Heart right ventricle (tissue), 16 donors: ENCODE measurements at regions of chr17 and their contacts with region 1.

Region 1: DNA sequence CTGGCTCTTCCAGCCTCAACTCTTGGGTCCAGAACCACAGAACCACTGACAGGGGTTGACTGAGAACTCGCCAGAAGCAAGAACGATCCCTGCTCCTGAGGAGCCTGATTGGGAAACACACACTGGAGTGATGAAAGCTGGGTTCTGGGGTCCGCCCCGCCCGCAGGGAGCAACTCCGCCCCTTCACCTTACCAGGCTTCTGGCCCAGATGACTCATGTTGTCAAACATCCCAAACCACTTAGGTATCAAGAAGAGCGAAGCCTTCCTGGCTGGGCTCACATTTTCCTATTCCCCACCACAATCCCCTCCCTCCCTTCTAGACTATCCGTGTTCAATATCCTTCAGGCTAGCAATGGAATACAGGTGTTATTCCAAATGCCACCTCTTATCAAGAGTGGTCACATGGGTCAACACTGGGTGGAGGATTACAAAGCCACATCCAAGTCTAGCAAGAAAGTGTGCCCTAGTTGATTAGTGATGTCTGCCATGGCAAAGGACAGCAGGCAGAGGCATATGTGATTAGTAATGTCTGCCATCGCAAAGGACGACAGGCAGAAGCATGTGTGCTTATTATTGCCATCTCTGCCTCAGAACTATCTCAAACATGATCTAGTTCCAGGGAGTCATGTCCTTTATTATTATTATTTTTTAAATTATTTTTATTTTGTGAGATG is 70.5 kb downstream of the TIMM22 start:
- DNase-seq: peak; percentile 52 to 55
- ATAC-seq: peak; percentile 78 to 95 (median 90)
- H3K4me3 ChIP-seq: no peak overlapping the region
- H3K27ac ChIP-seq: peak overlapping the region in 5 of 10 donors; percentile 19 to 59 (median 39)
- H3K4me1 ChIP-seq: peaks cover 0 to 15% (median 0%) of the 10 kb centered on the region in 9 donors
- H3K27me3 ChIP-seq: no peaks in the 10 kb centered on the region
- CTCF ChIP-seq: no peak

Region 2: GRCh38 chr17:915538-916201 is 151.7 kb before region 1 on chr17:
- intact Hi-C with region 1: no loop called
- DNase-seq: peak; percentile 30 to 75
- ATAC-seq: peak; percentile 66 to 88 (median 82)
- H3K4me3 ChIP-seq: peak overlapping the region in 4 of 10 donors; percentile 20 to 32 (median 27)
- H3K27ac ChIP-seq: peak overlapping the region; percentile 39 to 89 (median 80)
- H3K4me1 ChIP-seq: peaks cover 2 to 50% (median 24%) of the 10 kb centered on the region in 9 donors
- H3K27me3 ChIP-seq: no peaks in the 10 kb centered on the region
- CTCF ChIP-seq: no peak

Region 3: GRCh38 chr17:927611-928461 is 139.6 kb before region 1 on chr17:
- intact Hi-C with region 1: no loop called
- DNase-seq: no peak
- ATAC-seq: peak in 2 of 8 donors; percentile 13 to 19
- H3K4me3 ChIP-seq: no peak overlapping the region
- H3K27ac ChIP-seq: no peak overlapping the region
- H3K4me1 ChIP-seq: peaks cover 0 to 28% (median 8%) of the 10 kb centered on the region in 9 donors
- H3K27me3 ChIP-seq: no peaks in the 10 kb centered on the region
- CTCF ChIP-seq: no peak

Region 4: DNA sequence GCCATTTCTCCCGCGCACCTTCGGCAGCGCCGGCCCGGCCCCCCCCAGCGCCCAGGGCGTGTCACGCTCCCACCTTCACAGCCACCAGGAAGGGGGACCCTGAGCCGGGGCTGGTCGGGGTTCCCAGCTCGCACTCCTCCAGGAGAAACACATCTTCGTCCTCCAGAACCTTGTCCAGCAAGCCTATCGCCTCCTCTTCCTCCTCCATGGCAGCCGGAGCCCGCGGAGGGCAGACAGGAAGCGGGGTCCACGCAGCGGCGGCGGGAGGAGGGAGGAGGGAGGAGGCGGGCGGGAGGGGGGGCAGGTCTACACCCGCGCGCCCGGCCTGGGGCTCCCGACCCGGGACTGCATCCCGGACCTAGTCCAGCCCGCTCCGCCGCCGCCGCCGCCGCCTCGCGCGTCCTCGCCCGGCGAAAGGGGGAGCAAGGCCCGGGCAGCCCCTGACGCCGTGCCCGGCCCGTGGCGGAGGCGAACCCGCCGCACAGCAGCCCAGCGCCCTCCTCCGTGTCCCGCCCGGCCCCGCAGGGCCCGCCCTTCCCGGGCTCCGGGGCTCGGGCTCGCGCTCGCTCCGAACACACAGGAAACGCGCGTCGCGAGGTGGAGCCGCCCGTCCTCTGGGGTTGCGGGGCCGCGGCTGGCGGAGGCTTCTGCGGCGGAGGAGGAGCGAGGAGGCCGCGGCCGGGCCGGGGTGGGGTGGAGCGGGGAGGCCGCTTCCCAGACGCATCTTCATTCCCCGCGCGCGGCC is 41.6 kb after region 1 on chr17:
- intact Hi-C with region 1: loop called in 1 of 10 experiments (anchors 5 kb)
- DNase-seq: peak; percentile 68 to 80
- ATAC-seq: peak in 7 of 8 donors; percentile 4 to 73 (median 28)
- H3K4me3 ChIP-seq: peak overlapping the region; percentile 45 to 92 (median 74)
- H3K27ac ChIP-seq: peak overlapping the region; percentile 93 to 98 (median 97)
- H3K4me1 ChIP-seq: peaks cover 33 to 91% (median 76%) of the 10 kb centered on the region in 9 donors
- H3K27me3 ChIP-seq: no peaks in the 10 kb centered on the region
- CTCF ChIP-seq: no peak